ENCODE measurements at regions of chr2 and their contacts with region 1.

Region 1: GRCh38 chr2:152407204-152407721 is 72.3 kb downstream of the FMNL2 start:
- DNase-seq: peak in 1 of 2 experiments; percentile 45
- H3K4me3 ChIP-seq: no peak overlapping the region
- H3K27ac ChIP-seq: no peak overlapping the region
- H3K4me1 ChIP-seq: peaks cover 73% of the 10 kb centered on the region
- H3K27me3 ChIP-seq: no peaks in the 10 kb centered on the region
- CTCF ChIP-seq: no peak

Region 2: GRCh38 chr2:151381291-151381874 is 1025.9 kb before region 1 on chr2:
- CTCF ChIA-PET with region 1: no interaction called
- POLR2A ChIA-PET with region 1: no interaction called
- intact Hi-C with region 1: no loop called
- DNase-seq: no peak
- H3K4me3 ChIP-seq: no peak overlapping the region
- H3K27ac ChIP-seq: no peak overlapping the region
- H3K4me1 ChIP-seq: no peaks in the 10 kb centered on the region
- H3K27me3 ChIP-seq: no peaks in the 10 kb centered on the region
- CTCF ChIP-seq: no peak

Region 3: DNA sequence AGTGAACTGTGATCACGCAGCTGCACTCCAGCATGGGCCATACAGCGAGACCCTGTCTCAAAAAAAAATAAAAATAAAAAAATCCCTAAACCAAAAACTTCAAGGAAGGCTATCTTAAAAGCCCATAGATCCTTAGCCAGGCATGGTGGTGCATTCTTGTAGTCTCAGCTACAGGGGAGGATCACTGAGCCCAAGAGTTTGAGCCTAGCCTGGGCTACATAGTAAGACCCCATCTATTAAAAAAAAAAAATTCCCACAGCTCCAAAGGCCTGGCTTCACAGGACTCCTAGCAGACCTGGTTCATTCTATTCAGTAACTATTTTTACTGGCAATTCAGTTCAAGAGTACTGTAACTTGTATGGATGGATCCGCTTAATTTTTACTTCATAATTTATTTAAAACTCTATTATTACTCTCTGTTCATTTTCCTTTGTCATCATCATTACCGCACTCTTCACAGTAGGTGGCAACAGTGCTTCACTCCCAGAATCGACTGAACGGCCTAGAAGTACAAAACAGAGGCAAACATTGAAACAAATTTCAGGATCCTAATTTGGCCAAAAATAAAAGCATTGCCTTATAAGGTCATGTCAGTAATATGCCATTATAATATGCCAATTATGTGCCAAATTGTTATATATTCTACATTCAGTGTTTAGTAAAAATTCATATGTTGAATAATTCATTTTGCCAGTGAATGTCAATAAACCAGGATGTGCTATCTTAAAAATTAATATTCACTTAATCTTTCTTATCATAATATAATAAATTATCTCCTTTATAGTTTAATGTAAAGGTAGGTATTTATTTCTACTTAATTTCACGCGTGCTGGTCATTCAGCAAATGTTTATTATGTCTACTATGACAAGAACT is 217.4 kb before region 1 on chr2:
- CTCF ChIA-PET with region 1: no interaction called
- POLR2A ChIA-PET with region 1: no interaction called
- intact Hi-C with region 1: loop called (anchors 5 kb)
- DNase-seq: peak; percentile 39 to 53
- H3K4me3 ChIP-seq: no peak overlapping the region
- H3K27ac ChIP-seq: no peak overlapping the region
- H3K4me1 ChIP-seq: no peaks in the 10 kb centered on the region
- H3K27me3 ChIP-seq: no peaks in the 10 kb centered on the region
- CTCF ChIP-seq: peak; percentile 85

Region 4: GRCh38 chr2:152376385-152376784 is 30.9 kb before region 1 on chr2:
- CTCF ChIA-PET with region 1: no interaction called
- POLR2A ChIA-PET with region 1: interaction called, 15 read pairs
- intact Hi-C with region 1: no loop called
- DNase-seq: peak in 1 of 2 experiments; percentile 39
- H3K4me3 ChIP-seq: no peak overlapping the region
- H3K27ac ChIP-seq: no peak overlapping the region
- H3K4me1 ChIP-seq: peaks cover 25% of the 10 kb centered on the region
- H3K27me3 ChIP-seq: no peaks in the 10 kb centered on the region
- CTCF ChIP-seq: no peak

Region 5: GRCh38 chr2:152466980-152467676 is 59.9 kb after region 1 on chr2:
- CTCF ChIA-PET with region 1: no interaction called
- POLR2A ChIA-PET with region 1: no interaction called
- intact Hi-C with region 1: loop called (anchors 5 kb)
- DNase-seq: peak in 1 of 2 experiments; percentile 17
- H3K4me3 ChIP-seq: no peak overlapping the region
- H3K27ac ChIP-seq: peak overlapping the region; percentile 47; the same call in 1 of the 2 replicates
- H3K4me1 ChIP-seq: peaks cover 73% of the 10 kb centered on the region
- H3K27me3 ChIP-seq: no peaks in the 10 kb centered on the region
- CTCF ChIP-seq: no peak

Region 6: GRCh38 chr2:152485954-152486736 is 78.9 kb after region 1 on chr2:
- CTCF ChIA-PET with region 1: no interaction called
- POLR2A ChIA-PET with region 1: no interaction called
- intact Hi-C with region 1: no loop called
- DNase-seq: no peak
- H3K4me3 ChIP-seq: no peak overlapping the region
- H3K27ac ChIP-seq: no peak overlapping the region
- H3K4me1 ChIP-seq: 0 out of 2 replicates have a peak, but pooled peaks cover 11% of the 10 kb centered on the region
- H3K27me3 ChIP-seq: no peaks in the 10 kb centered on the region
- CTCF ChIP-seq: no peak

Region 7: GRCh38 chr2:152505495-152505906 is 98.2 kb after region 1 on chr2:
- CTCF ChIA-PET with region 1: no interaction called
- POLR2A ChIA-PET with region 1: interaction called, 4 read pairs
- intact Hi-C with region 1: loop called (anchors 2 kb)
- DNase-seq: peak in 1 of 2 experiments; percentile 55
- H3K4me3 ChIP-seq: no peak overlapping the region
- H3K27ac ChIP-seq: peak overlapping the region; percentile 65
- H3K4me1 ChIP-seq: peaks cover 51% of the 10 kb centered on the region
- H3K27me3 ChIP-seq: no peaks in the 10 kb centered on the region
- CTCF ChIP-seq: no peak

Region 8: GRCh38 chr2:152573168-152573567 is 165.9 kb after region 1 on chr2:
- CTCF ChIA-PET with region 1: no interaction called
- POLR2A ChIA-PET with region 1: no interaction called
- intact Hi-C with region 1: no loop called
- DNase-seq: no peak
- H3K4me3 ChIP-seq: no peak overlapping the region
- H3K27ac ChIP-seq: no peak overlapping the region
- H3K4me1 ChIP-seq: no peaks in the 10 kb centered on the region
- H3K27me3 ChIP-seq: no peaks in the 10 kb centered on the region
- CTCF ChIP-seq: no peak

Region 9: DNA sequence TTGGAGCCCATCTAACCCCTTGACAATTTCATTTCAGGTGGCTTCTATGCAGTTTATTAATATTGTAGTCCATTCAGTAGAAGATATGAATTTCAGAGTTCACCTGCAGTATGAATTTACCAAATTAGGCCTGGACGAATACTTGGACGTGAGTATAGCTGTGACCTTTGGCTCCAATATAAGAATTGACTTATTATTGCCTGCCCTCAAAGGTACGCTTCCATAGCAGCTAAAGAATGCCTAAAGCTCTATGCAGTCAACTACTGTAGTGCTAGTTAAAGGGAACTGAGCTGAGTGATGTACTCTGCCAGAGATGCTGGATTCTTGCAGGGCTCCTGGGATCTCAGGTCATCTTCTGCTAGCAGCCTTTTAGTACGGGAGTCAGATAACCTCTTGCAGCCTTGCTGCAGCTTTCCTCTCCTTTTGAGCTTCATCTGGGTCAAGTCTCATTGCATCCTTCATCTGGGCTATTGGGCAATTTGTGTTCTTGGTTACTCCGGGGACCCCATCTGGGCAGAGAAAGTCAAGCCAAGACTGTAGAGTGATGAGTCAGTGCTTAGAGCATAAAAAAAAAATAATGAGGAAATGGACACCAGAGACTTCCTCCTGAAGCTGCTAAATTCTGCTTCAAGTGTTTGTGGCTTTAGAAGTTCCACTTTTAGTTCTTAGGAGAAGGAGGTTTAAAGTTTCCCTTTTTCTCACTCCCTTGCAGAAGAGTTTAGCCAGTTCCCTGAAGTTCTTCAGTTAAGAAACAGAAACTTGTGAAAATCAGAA is 204.4 kb after region 1 on chr2:
- CTCF ChIA-PET with region 1: no interaction called
- POLR2A ChIA-PET with region 1: no interaction called
- intact Hi-C with region 1: loop called (anchors 10 kb)
- DNase-seq: peak in 1 of 2 experiments; percentile 34
- H3K4me3 ChIP-seq: no peak overlapping the region
- H3K27ac ChIP-seq: no peak overlapping the region; the same call in 1 of the 2 replicates
- H3K4me1 ChIP-seq: peaks cover 20% of the 10 kb centered on the region; the same call in 1 of the 2 replicates
- H3K27me3 ChIP-seq: no peaks in the 10 kb centered on the region
- CTCF ChIP-seq: no peak

Measured in PC-9 (cell line).